ENCODE measurements at regions of chr15 and their contacts with region 1.

Region 1: DNA sequence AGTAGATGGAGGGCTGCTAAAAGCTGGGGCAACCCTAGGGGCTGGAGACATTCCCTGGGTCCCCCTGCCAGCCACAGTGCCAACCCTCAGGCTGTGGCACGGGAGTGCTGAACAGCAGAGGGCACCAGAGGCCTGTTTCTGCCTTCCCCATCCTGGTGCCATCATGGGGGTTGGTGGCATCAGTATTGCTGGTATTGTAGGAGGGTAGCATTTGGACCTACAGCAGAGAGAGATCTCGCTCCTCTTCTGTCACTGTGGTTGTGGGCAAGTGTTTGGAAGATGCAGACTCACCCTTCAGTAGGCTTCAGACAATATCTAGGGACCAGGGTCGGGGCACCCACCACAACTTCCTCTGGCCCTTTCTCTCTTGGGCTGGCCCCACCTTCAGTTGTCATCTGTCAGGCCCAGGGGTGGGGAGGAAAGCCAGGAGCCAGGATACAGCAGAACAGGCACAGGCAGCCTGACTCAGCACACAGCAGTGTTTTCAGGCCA is 123.5 kb downstream of the RPLP1 start:
- DNase-seq: peak in 1 of 2 experiments; percentile 71
- H3K4me3 ChIP-seq: no peak overlapping the region
- H3K27ac ChIP-seq: no peak overlapping the region
- H3K4me1 ChIP-seq: peaks cover 60% of the 10 kb centered on the region
- H3K27me3 ChIP-seq: no peaks in the 10 kb centered on the region
- CTCF ChIP-seq: peak; percentile 76

Region 2: GRCh38 chr15:69480932-69481658 is 95.0 kb before region 1 on chr15:
- CTCF ChIA-PET with region 1: no interaction called
- POLR2A ChIA-PET with region 1: interaction called, 3 read pairs
- intact Hi-C with region 1: loop called (anchors 2 kb)
- DNase-seq: peak; percentile 76 to 95
- H3K4me3 ChIP-seq: no peak overlapping the region
- H3K27ac ChIP-seq: peak overlapping the region; percentile 70
- H3K4me1 ChIP-seq: peaks cover 43% of the 10 kb centered on the region
- H3K27me3 ChIP-seq: no peaks in the 10 kb centered on the region
- CTCF ChIP-seq: no peak

Region 3: DNA sequence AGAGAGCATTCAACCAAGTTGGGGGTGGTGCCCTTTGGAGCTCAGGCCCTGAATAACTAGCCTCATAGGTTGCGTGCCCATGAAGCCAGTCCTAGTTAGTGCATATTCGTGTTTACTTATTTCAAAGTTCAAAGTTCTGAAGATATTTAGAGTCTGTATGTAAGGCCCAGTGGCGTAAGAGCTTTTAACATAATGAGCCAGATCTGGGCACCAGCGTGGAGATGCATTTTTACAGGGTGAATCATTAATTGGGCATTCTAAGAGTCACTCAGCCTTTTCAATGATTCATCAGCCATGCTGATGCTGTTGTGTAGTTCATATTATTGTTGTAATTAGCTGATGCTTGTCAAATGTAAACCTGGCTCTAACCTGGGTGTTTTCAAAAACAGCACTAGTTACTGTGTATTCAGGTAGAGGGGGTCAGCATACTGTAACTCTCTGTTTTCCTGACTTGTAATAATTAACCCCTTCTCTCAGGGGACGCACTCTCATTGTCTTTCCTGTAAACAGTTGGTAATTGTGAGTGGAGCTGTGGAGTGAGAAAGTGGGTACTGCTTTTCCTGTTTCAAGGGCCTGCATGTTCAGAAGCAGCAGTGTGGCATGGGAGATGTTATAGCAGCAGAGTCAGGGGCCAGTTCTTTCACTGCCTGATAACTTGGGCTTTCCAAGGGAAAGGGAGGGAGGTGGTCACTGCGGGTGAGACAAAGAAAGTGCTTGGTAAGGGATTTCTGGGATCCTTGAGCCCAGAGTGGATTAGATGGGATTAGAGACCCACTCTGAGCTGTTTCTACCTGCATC is 18.5 kb before region 1 on chr15:
- CTCF ChIA-PET with region 1: interaction called, 15 read pairs
- POLR2A ChIA-PET with region 1: interaction called, 3 read pairs
- intact Hi-C with region 1: no loop called
- DNase-seq: peak; percentile 67 to 95
- H3K4me3 ChIP-seq: no peak overlapping the region
- H3K27ac ChIP-seq: peak overlapping the region; percentile 63
- H3K4me1 ChIP-seq: peaks cover 54% of the 10 kb centered on the region
- H3K27me3 ChIP-seq: no peaks in the 10 kb centered on the region
- CTCF ChIP-seq: no peak

Region 4: DNA sequence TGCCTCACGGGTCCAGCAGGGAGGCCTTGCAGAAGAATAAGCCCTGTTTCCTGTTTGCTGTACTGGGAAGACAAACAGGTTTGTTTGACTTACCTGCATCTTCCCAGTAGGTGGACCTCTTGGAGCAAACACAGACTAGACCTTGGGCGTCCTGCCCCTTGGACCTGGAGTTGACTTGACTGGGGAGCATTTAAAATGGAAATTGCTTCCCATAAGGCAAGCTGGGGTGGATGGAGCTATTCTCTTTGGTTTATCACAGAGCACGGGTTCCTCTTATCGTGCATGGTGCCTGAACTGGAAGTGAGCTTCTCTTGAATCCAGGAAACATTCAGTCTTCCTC is 28.0 kb after region 1 on chr15:
- CTCF ChIA-PET with region 1: no interaction called
- POLR2A ChIA-PET with region 1: no interaction called
- intact Hi-C with region 1: no loop called
- DNase-seq: peak; percentile 44 to 84
- H3K4me3 ChIP-seq: no peak overlapping the region
- H3K27ac ChIP-seq: no peak overlapping the region
- H3K4me1 ChIP-seq: peaks cover 12% of the 10 kb centered on the region
- H3K27me3 ChIP-seq: 0 out of 2 replicates have a peak, but pooled peaks cover 6% of the 10 kb centered on the region
- CTCF ChIP-seq: peak; percentile 68

Region 5: DNA sequence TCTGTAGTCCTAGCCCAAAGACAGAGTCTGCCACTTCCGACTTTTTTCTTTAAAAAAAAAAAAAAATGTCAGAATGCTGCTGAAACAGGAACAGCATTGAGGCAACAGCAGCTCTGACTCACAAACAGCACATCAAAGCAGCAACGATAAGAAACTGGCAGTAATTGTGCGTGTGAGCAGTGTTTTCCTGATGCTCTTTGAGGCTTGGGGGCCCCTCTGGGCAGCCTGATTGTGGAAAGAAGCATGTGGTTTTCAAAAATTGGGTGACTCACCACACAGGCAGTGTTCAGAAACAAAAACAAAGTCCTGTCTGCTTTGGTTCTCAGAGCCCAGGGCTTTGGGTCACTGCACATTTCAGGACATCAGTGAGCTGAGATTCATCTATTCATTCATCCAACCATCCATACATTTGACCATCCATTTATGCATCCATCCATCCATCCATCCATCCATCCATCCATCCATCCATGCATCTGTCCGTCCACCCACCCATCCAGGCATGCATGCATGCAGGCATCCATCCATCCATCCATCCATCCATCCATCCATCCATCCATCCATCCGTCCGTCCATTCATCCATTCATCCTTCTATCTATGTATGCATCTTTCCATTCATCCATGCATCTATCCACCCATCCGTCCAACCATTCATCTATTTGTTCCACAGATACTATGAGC is 184.9 kb after region 1 on chr15:
- CTCF ChIA-PET with region 1: no interaction called
- POLR2A ChIA-PET with region 1: interaction called, 31 read pairs
- intact Hi-C with region 1: loop called (anchors 1 kb)
- DNase-seq: peak; percentile 79 to 95
- H3K4me3 ChIP-seq: no peak overlapping the region
- H3K27ac ChIP-seq: peak overlapping the region; percentile 51
- H3K4me1 ChIP-seq: peaks cover 49% of the 10 kb centered on the region
- H3K27me3 ChIP-seq: no peaks in the 10 kb centered on the region
- CTCF ChIP-seq: no peak

Region 6: DNA sequence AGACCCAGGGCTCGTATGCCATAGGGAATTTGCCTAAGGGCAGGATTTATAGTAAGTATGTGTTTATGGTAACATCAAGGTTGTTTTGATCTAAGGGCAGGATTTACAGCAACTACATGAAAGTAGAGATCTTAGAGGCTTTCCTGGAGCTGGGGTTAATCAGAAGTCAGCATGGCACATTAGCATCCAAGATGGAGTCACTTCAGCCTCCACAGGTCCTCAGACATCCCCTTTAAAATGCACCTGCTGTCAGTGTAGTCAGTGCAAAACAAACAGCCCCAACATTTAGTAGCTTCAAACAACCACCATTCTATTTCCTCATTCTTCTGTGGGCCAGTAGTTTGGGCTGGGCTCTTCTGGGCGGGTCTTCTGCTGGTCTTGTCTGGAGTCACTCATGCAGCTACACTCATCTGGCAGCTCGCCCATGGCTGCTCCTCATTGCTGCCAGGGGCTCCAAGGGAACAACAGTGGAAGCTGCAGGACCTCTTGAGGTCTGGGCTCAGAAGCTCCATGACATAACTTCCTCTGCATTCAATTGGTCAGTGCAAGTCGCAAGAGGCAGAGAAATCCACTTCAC is 421.7 kb after region 1 on chr15:
- CTCF ChIA-PET with region 1: no interaction called
- POLR2A ChIA-PET with region 1: no interaction called
- intact Hi-C with region 1: loop called (anchors 10 kb)
- DNase-seq: peak; percentile 91 to 94
- H3K4me3 ChIP-seq: no peak overlapping the region
- H3K27ac ChIP-seq: no peak overlapping the region
- H3K4me1 ChIP-seq: peaks cover 19% of the 10 kb centered on the region
- H3K27me3 ChIP-seq: no peaks in the 10 kb centered on the region
- CTCF ChIP-seq: no peak

Region 7: GRCh38 chr15:70245932-70246331 is 669.9 kb after region 1 on chr15:
- CTCF ChIA-PET with region 1: no interaction called
- POLR2A ChIA-PET with region 1: no interaction called
- intact Hi-C with region 1: loop called (anchors 10 kb)
- DNase-seq: peak; percentile 72 to 74
- H3K4me3 ChIP-seq: no peak overlapping the region
- H3K27ac ChIP-seq: peak overlapping the region; percentile 72
- H3K4me1 ChIP-seq: peaks cover 51% of the 10 kb centered on the region
- H3K27me3 ChIP-seq: no peaks in the 10 kb centered on the region
- CTCF ChIP-seq: no peak

Region 8: GRCh38 chr15:70584838-70585706 is 1009.0 kb after region 1 on chr15:
- CTCF ChIA-PET with region 1: no interaction called
- POLR2A ChIA-PET with region 1: no interaction called
- intact Hi-C with region 1: loop called (anchors 2 kb)
- DNase-seq: peak; percentile 71 to 86
- H3K4me3 ChIP-seq: peak overlapping the region; percentile 46; the same call in 1 of the 2 replicates
- H3K27ac ChIP-seq: peak overlapping the region; percentile 81
- H3K4me1 ChIP-seq: peaks cover 18% of the 10 kb centered on the region
- H3K27me3 ChIP-seq: no peaks in the 10 kb centered on the region
- CTCF ChIP-seq: peak; percentile 74

Measured in PC-9 (cell line).